Naive thymus-derived CD4-positive, alpha-beta T cell (primary cell): ENCODE measurements at regions of chr13 and their contacts with region 1.

Region 1: DNA sequence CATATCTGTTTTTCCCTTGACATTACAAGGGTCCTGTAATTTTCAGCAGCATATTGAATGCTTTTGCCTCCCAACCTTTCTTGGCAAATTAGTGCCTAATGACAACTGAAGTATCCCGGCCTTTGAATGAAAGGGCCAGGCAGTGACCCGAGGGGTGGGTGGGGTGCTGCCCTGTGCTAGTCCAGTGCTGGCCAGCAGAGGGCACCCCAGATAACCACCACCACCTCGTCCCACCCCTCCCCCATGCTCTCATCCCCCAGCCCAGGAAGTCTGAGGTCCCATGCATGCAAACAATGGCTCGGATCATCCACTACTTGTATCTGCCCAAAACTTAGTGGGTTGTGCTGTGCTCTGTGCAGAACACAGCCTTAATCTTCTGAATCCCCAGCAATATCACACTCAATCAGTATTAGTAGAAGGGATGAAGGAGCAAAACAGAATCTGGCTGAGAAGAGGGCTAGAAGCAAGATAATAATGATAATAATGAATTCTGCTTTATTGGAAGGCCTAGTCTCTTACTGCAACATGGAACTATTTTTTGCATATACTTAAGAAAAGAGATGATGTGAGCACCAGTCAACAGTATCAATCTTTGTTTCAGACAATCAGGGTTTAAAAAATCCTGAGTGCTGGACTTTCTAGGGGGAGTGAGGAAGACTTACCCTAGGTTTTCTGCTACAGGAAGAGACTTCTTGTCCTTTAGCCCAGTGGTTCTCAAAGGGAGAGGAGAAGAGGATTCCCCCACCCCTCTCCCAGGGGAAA is 3.8 kb downstream of the ATP12A start:
- DNase-seq: peak; percentile 28 to 63 (median 55)
- ATAC-seq: peak; percentile 88
- H3K4me3 ChIP-seq: no peak overlapping the region
- H3K4me3 Mint-ChIP-seq: peak overlapping the region; percentile 5 to 64 (median 39)
- H3K27ac ChIP-seq: no peak overlapping the region
- H3K27ac Mint-ChIP-seq: peak overlapping the region in 7 of 9 donors; percentile 0 to 87 (median 37)
- H3K4me1 ChIP-seq: peaks cover 15 to 30% of the 10 kb centered on the region in 2 donors
- H3K4me1 Mint-ChIP-seq: peaks cover 22 to 43% (median 30%) of the 10 kb centered on the region in 7 donors
- H3K27me3 ChIP-seq: peaks cover 4 to 10% of the 10 kb centered on the region in 2 donors
- H3K27me3 Mint-ChIP-seq: peaks cover 22 to 58% (median 33%) of the 10 kb centered on the region in 5 donors

Region 2: GRCh38 chr13:24512197-24512907 is 171.7 kb before region 1 on chr13 and contains the start of gene PARP4:
- CTCF ChIA-PET with region 1: no interaction called
- POLR2A ChIA-PET with region 1: no interaction called
- intact Hi-C with region 1: loop called in 1 of 2 experiments (anchors 5 kb)
- DNase-seq: peak; percentile 49 to 74 (median 68)
- ATAC-seq: peak; percentile 85
- H3K4me3 ChIP-seq: peak within 1 kb of the TSS; percentile 95
- H3K4me3 Mint-ChIP-seq: peak within 1 kb of the TSS; percentile 88 to 96 (median 92)
- H3K27ac ChIP-seq: peak within 1 kb of the TSS; percentile 67
- H3K27ac Mint-ChIP-seq: peak within 1 kb of the TSS; percentile 68 to 93 (median 88)
- H3K4me1 ChIP-seq: peaks cover 3 to 7% of the 10 kb centered on the region in 2 donors
- H3K4me1 Mint-ChIP-seq: peaks cover 22 to 51% (median 41%) of the 10 kb centered on the region in 7 donors
- H3K27me3 ChIP-seq: no peaks in the 10 kb centered on the region
- H3K27me3 Mint-ChIP-seq: peaks cover 0 to 4% (median 0%) of the 10 kb centered on the region in 5 donors
- total RNA-seq, gene PARP4: 33.4 to 71.1 (median 65.4) TPM

Region 3: GRCh38 chr13:24709186-24709913 is 25.3 kb after region 1 on chr13:
- CTCF ChIA-PET with region 1: no interaction called
- POLR2A ChIA-PET with region 1: interaction called, 4 read pairs
- intact Hi-C with region 1: loop called in 1 of 2 experiments (anchors 1 kb)
- DNase-seq: peak; percentile 22 to 82 (median 74)
- ATAC-seq: peak; percentile 91
- H3K4me3 ChIP-seq: peak overlapping the region; percentile 17
- H3K4me3 Mint-ChIP-seq: peak overlapping the region; percentile 57 to 76 (median 74)
- H3K27ac ChIP-seq: peak overlapping the region; percentile 15
- H3K27ac Mint-ChIP-seq: peak overlapping the region; percentile 69 to 92 (median 90)
- H3K4me1 ChIP-seq: peaks cover 6 to 10% of the 10 kb centered on the region in 2 donors
- H3K4me1 Mint-ChIP-seq: peaks cover 4 to 36% (median 15%) of the 10 kb centered on the region in 7 donors
- H3K27me3 ChIP-seq: no peaks in the 10 kb centered on the region
- H3K27me3 Mint-ChIP-seq: peaks cover 0 to 11% (median 0%) of the 10 kb centered on the region in 5 donors

Region 4: DNA sequence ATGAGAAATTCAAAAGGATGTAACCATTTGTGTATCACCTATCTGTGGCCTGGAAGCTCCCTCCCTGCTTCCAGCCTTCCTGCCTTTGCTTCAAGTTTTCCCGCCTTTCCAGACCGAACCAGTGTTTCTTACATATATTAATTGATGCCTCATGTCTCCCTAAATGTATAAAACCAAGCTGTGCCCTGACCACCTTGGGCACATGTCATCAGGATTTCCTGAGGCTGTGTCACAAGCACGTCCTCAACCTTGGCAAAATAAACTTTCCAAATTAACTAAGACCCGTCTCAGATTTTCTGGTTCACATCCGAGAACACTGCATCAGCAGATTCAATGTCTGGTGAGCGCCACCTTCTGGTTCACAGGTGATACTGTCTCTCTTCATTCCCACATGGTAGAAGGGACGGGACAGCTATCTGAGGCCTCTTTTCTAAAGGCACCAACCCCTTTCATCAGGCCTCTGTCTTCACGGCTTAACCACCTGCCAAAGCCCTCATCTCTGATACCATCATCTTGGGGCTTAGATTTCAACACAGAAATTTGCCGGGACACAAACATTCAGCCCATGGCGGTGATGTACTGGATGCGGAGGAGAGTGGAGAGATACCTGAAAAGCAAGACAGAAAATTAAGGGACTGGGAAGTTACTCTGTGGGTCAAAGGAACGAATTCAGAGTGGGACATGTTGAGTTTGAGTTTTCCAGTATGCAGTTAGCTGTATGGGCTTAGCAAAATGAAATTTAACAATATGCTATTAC is 353.2 kb after region 1 on chr13:
- CTCF ChIA-PET with region 1: no interaction called
- POLR2A ChIA-PET with region 1: no interaction called
- intact Hi-C with region 1: loop called in 1 of 2 experiments (anchors 2 kb)
- DNase-seq: peak in 6 of 9 donors; percentile 6 to 53 (median 36)
- ATAC-seq: peak; percentile 70
- H3K4me3 ChIP-seq: no peak overlapping the region
- H3K4me3 Mint-ChIP-seq: no peak overlapping the region
- H3K27ac ChIP-seq: no peak overlapping the region
- H3K27ac Mint-ChIP-seq: no peak overlapping the region
- H3K4me1 ChIP-seq: no peaks in the 10 kb centered on the region
- H3K4me1 Mint-ChIP-seq: no peaks in the 10 kb centered on the region
- H3K27me3 ChIP-seq: no peaks in the 10 kb centered on the region
- H3K27me3 Mint-ChIP-seq: peaks cover 37 to 64% (median 50%) of the 10 kb centered on the region in 5 donors

Region 5: DNA sequence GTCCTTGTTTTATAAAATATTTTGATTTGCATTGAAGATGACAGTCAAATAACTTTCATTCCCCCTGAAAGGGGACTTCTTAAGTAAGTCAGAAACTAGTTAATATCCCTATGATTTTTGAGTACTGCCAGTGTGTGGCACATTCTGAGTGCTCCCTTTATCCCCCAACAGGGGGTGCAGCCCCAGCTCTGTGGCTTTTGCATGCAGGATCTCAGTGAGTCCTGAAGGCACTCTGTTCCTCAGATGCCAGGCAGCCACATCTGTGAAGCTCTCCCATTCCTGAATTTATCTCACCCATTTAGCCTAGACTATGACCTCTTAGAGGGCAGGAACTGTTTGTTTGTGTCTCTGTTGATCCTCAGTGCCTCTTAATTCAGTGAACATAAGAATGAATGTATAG is 1693.0 kb after region 1 on chr13:
- CTCF ChIA-PET with region 1: no interaction called
- POLR2A ChIA-PET with region 1: no interaction called
- intact Hi-C with region 1: no loop called
- DNase-seq: peak in 1 of 9 donors; percentile 4
- ATAC-seq: no peak
- H3K4me3 ChIP-seq: no peak overlapping the region
- H3K4me3 Mint-ChIP-seq: no peak overlapping the region
- H3K27ac ChIP-seq: no peak overlapping the region
- H3K27ac Mint-ChIP-seq: no peak overlapping the region
- H3K4me1 ChIP-seq: peaks cover 7 to 11% of the 10 kb centered on the region in 2 donors
- H3K4me1 Mint-ChIP-seq: peaks cover 5 to 40% (median 28%) of the 10 kb centered on the region in 7 donors
- H3K27me3 ChIP-seq: no peaks in the 10 kb centered on the region
- H3K27me3 Mint-ChIP-seq: no peaks in the 10 kb centered on the region